ENCODE measurements at regions of chr19 and their contacts with region 1.

Region 1: DNA sequence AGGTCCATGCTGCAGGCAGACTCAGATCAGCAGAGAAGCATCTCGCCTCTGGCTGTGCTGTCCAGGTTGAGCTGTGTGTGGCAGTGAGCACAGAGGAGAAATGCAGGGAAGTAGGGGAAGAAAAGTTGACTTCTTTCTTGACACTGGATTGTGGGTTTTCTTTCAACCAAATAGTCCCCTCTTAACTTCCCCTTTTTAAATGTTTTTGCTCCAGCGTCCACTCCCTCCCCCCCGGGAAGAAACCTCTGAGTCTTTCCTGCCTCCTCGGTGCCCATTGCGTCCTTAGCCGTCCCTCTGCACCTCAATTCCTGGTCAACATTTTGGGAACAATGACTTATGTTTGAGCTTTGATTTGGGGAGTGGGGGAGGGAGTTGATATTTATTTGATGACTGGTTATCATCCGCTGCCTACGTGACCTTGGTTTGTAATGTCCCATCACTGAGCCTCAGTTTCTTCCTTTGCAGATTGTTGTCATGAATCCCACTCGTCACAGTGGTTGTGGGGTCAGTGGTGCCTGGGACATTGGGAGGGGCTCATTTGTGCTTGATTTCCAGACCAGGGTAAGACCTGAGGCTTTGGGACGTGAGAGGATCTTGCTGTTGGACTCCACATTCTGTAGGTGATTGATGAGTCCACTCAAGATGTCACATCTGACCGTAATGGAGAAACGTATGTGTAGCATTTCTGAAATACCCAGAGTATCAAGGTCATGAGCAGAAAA is at the start of gene LILRB2:
- DNase-seq: no peak
- H3K4me3 ChIP-seq: peak within 1 kb of the TSS in 3 of 4 donors; percentile 17 to 36 (median 22)
- H3K27ac ChIP-seq: peak within 1 kb of the TSS in 2 of 5 donors; percentile 60 to 66
- H3K4me1 ChIP-seq: no peaks in the 10 kb centered on the region
- H3K27me3 ChIP-seq: peaks cover 0 to 64% (median 9%) of the 10 kb centered on the region in 3 donors
- CTCF ChIP-seq: no peak
- EP300 ChIP-seq: no peak
- POLR2A ChIP-seq: no peak
- total RNA-seq, gene LILRB2: 0.87 to 2.2 (median 1.2) TPM in 4 of 5 donors, not detected in the other

Region 2: GRCh38 chr19:54245936-54246335 is 35.2 kb before region 1 on chr19:
- intact Hi-C with region 1: no loop called
- DNase-seq: no peak
- H3K4me3 ChIP-seq: no peak overlapping the region
- H3K27ac ChIP-seq: no peak overlapping the region
- H3K4me1 ChIP-seq: peaks cover 0 to 16% (median 0%) of the 10 kb centered on the region in 4 donors
- H3K27me3 ChIP-seq: peaks cover 0 to 33% (median 5%) of the 10 kb centered on the region in 3 donors
- CTCF ChIP-seq: no peak
- EP300 ChIP-seq: no peak
- POLR2A ChIP-seq: no peak

Region 3: DNA sequence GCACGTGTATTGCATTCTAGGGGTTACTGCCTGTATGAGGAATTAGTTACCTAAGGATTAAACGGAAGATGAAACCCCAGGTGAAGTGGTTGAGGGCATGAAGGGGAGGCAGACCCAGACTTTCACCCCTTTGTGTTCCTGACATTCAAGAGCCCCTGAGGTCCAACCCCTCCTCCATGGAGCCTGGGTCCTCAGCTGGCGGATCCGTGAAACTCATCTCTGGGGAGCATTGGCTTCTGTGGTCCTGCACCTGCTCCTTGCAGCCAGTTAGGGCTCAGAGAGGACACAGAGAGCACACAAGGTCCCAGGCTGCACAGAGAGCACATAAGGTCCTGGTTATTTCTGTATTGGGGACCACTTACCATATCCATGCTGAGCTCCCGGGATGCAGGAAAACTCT is 305.2 kb after region 1 on chr19:
- intact Hi-C with region 1: loop called (anchors 5 kb)
- DNase-seq: no peak
- H3K4me3 ChIP-seq: no peak overlapping the region
- H3K27ac ChIP-seq: no peak overlapping the region
- H3K4me1 ChIP-seq: no peaks in the 10 kb centered on the region
- H3K27me3 ChIP-seq: peaks cover 0 to 23% (median 0%) of the 10 kb centered on the region in 3 donors
- CTCF ChIP-seq: no peak
- EP300 ChIP-seq: no peak
- POLR2A ChIP-seq: no peak

Measured in stomach (tissue), 19 donors.